AG04449 (cell line): ENCODE measurements at regions of chr16 and their contacts with region 1.

Region 1: GRCh38 chr16:2520092-2520783 is at the start of gene AMDHD2:
- DNase-seq: no peak
- H3K4me3 ChIP-seq: peak within 1 kb of the TSS; percentile 72
- CTCF ChIP-seq: no peak

Region 2: GRCh38 chr16:2531767-2532493 is 11.7 kb after region 1 on chr16:
- CTCF ChIA-PET with region 1: interaction called, 4 read pairs
- POLR2A ChIA-PET with region 1: interaction called, 28 read pairs
- DNase-seq: peak; percentile 69
- H3K4me3 ChIP-seq: peak overlapping the region; percentile 65
- CTCF ChIP-seq: no peak